PC-9 (cell line): ENCODE measurements at regions of chr11 and their contacts with region 1.

Region 1: GRCh38 chr11:116276051-116277044 is 496.4 kb downstream of the BUD13 start:
- DNase-seq: peak; percentile 46
- H3K4me3 ChIP-seq: no peak overlapping the region
- H3K27ac ChIP-seq: no peak overlapping the region
- H3K4me1 ChIP-seq: no peaks in the 10 kb centered on the region
- H3K27me3 ChIP-seq: peaks cover 47% of the 10 kb centered on the region
- CTCF ChIP-seq: peak; percentile 94

Region 2: DNA sequence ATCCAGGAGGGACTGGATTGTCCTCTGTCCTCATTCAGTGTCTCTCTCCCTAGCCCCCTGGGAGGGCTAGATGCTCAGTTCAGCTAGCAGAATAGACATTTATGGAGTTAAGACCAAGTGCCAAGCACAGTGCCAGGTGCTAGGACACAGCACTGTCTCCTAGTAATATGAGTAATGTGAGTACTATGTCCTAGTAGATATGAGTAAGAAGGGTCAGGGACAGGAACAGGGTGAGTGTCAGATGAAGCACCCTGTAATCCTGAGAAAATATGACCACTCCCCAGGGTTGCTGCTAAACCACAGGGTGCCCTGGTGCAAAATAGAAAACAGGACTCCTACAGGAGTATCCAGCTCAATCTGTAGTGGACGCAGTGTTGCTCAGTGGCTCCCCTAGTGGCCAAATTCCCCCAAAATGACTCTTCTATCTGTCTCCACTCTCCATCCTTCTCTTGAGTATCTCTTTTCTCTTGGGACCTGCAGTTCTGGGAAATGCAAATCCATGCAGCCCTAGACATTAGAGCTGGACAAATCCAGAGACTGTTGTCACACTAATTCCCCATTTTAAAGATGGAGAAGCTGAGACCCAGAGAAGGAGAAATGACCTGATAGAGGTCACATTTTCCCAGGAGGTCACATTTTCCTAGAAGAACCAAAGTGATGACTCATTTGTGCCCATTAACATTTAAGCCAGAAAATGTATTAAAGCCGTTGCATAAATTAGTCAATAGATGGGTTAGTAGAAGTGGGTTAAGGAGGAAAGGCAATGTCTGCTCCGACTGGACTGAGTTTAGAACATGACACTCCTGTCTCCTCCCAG is 1383.8 kb before region 1 on chr11:
- CTCF ChIA-PET with region 1: no interaction called
- POLR2A ChIA-PET with region 1: no interaction called
- intact Hi-C with region 1: no loop called
- DNase-seq: peak in 1 of 2 experiments; percentile 1
- H3K4me3 ChIP-seq: no peak overlapping the region
- H3K27ac ChIP-seq: no peak overlapping the region
- H3K4me1 ChIP-seq: no peaks in the 10 kb centered on the region
- H3K27me3 ChIP-seq: peaks cover 27% of the 10 kb centered on the region
- CTCF ChIP-seq: peak; percentile 68

Region 3: DNA sequence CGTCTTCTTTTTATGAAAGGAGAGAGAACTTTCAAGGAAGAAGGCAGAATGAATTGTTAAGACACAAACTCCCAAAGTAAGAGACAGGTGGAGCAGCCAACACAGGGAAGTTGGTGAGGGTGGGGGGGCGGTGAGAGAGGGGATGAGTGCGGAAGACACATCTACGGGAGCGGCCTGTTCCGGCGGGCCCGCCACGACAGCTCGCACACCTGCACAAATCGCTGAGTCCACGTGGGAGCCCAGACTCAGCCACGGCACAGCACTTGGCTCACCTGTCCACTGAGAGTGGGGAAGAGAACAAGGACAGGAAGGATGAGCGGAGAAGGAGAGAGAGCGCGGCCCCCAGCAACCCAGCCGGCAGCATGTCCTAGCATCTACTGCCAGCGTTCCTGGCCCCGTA is 1103.2 kb before region 1 on chr11:
- CTCF ChIA-PET with region 1: interaction called, 12 read pairs
- POLR2A ChIA-PET with region 1: no interaction called
- intact Hi-C with region 1: no loop called
- DNase-seq: no peak
- H3K4me3 ChIP-seq: no peak overlapping the region
- H3K27ac ChIP-seq: no peak overlapping the region
- H3K4me1 ChIP-seq: no peaks in the 10 kb centered on the region
- H3K27me3 ChIP-seq: peaks cover 27% of the 10 kb centered on the region
- CTCF ChIP-seq: no peak

Region 4: GRCh38 chr11:115324581-115325432 is 951.5 kb before region 1 on chr11:
- CTCF ChIA-PET with region 1: no interaction called
- POLR2A ChIA-PET with region 1: no interaction called
- intact Hi-C with region 1: loop called (anchors 10 kb)
- DNase-seq: peak; percentile 1 to 47
- H3K4me3 ChIP-seq: no peak overlapping the region
- H3K27ac ChIP-seq: no peak overlapping the region
- H3K4me1 ChIP-seq: no peaks in the 10 kb centered on the region
- H3K27me3 ChIP-seq: 0 out of 2 replicates have a peak, but pooled peaks cover 4% of the 10 kb centered on the region
- CTCF ChIP-seq: peak; percentile 78

Region 5: GRCh38 chr11:116263770-116264169 is 12.6 kb before region 1 on chr11:
- CTCF ChIA-PET with region 1: no interaction called
- POLR2A ChIA-PET with region 1: interaction called, 13 read pairs
- intact Hi-C with region 1: no loop called
- DNase-seq: no peak
- H3K4me3 ChIP-seq: no peak overlapping the region
- H3K27ac ChIP-seq: no peak overlapping the region
- H3K4me1 ChIP-seq: no peaks in the 10 kb centered on the region
- H3K27me3 ChIP-seq: peaks cover 65% of the 10 kb centered on the region
- CTCF ChIP-seq: no peak